ENCODE measurements at regions of chr3 and their contacts with region 1.

Region 1: DNA sequence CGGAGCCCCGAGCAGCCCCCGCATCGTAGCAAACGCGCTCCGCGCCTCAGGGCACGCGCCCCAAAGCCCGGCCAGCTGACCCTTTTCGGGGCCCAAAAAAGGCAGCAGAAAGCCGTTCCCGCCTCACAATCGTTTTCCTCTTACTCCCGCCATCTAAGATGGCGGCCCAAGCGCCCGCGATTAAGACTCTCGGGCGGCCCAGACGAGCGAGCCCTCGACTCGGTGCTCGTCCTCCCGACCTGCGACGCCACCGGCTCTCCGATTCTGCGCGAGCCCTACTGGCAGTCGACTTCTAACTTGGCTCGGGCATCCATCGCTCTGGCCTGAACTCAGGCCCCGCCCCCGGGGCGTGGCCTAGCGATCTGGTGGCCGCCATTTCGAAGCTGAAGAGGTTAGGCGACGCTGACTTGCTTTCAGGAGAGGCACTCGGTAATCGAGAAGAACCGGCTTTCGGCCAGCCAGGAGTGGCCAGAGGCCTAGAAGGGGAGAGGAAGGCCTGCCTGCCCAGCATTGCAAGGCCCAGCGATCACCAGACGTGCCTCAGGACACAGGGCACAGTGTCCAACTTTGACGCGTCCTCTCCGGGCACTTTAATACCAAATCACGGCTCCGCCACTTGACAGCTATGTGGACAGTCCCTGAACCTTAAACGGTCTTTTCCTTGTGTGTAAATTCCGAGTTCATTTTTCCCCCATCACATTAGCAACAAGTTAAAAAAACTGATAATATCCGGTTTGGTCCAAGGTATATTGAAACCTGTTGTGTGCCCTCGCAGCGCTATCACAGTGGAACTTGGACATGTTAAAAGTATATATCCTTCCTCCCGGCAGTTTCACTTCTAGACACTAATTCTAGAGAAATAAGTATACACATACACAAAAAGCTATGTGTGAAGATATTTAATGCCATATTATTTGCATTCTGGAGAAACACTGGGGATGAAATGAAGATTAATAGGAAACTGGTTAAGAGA is at the start of gene RAF1:
- DNase-seq: peak; percentile 97 to 100 (median 98)
- ATAC-seq: peak; percentile 89
- H3K4me3 ChIP-seq: peak within 1 kb of the TSS; percentile 99
- H3K27ac ChIP-seq: peak within 1 kb of the TSS; percentile 99
- H3K4me1 ChIP-seq: peaks cover 21 to 25% of the 10 kb centered on the region in 2 experiments
- H3K27me3 ChIP-seq: no peaks in the 10 kb centered on the region
- CTCF ChIP-seq: no peak; a peak in 1 of 6 replicates
- EP300 ChIP-seq: peak; percentile 50; the same call in 1 of the 2 replicates
- POLR2A ChIP-seq: peak; percentile 97
- RAD21 ChIP-seq: no peak
- polyA plus RNA-seq, gene RAF1: 28.0 to 32.3 TPM

Region 2: GRCh38 chr3:12556671-12557472 is 107.3 kb before region 1 on chr3 and contains the start of gene MKRN2:
- CTCF ChIA-PET with region 1: no interaction called
- POLR2A ChIA-PET with region 1: interaction called, 5 read pairs
- in situ Hi-C with region 1: no loop called
- intact Hi-C with region 1: loop called (anchors 5 kb)
- DNase-seq: peak; percentile 92 to 94 (median 92)
- ATAC-seq: peak; percentile 93
- H3K4me3 ChIP-seq: peak within 1 kb of the TSS; percentile 82
- H3K27ac ChIP-seq: peak within 1 kb of the TSS; percentile 91
- H3K4me1 ChIP-seq: peaks cover 17 to 22% of the 10 kb centered on the region in 2 experiments
- H3K27me3 ChIP-seq: no peaks in the 10 kb centered on the region
- CTCF ChIP-seq: 0 out of 6 replicates have a peak, but pooled peaks of 1 of the 3 experiments have one; percentile 6
- EP300 ChIP-seq: peak; percentile 70
- POLR2A ChIP-seq: peak; percentile 99
- RAD21 ChIP-seq: peak in 1 of 2 experiments; percentile 2; a peak in 1 of 4 replicates
- polyA plus RNA-seq, gene MKRN2: 29.4 to 46.0 TPM

Region 3: GRCh38 chr3:12629560-12629959 is 34.7 kb before region 1 on chr3:
- CTCF ChIA-PET with region 1: no interaction called
- POLR2A ChIA-PET with region 1: interaction called, 6 read pairs
- in situ Hi-C with region 1: no loop called
- intact Hi-C with region 1: loop called (anchors 5 kb)
- DNase-seq: no peak
- ATAC-seq: peak; percentile 32; the same call in 2 of the 3 replicates
- H3K4me3 ChIP-seq: no peak overlapping the region
- H3K27ac ChIP-seq: no peak overlapping the region
- H3K4me1 ChIP-seq: peaks cover 45 to 53% of the 10 kb centered on the region in 2 experiments
- H3K27me3 ChIP-seq: no peaks in the 10 kb centered on the region
- CTCF ChIP-seq: no peak
- EP300 ChIP-seq: no peak
- POLR2A ChIP-seq: no peak
- RAD21 ChIP-seq: no peak

Region 4: GRCh38 chr3:12648384-12648959 is 15.8 kb before region 1 on chr3:
- CTCF ChIA-PET with region 1: no interaction called
- POLR2A ChIA-PET with region 1: interaction called, 24 read pairs
- in situ Hi-C with region 1: no loop called
- intact Hi-C with region 1: no loop called
- DNase-seq: no peak
- ATAC-seq: no peak
- H3K4me3 ChIP-seq: no peak overlapping the region
- H3K27ac ChIP-seq: no peak overlapping the region
- H3K4me1 ChIP-seq: peaks cover 4 to 8% of the 10 kb centered on the region in 2 experiments; a peak in 4 of 5 replicates
- H3K27me3 ChIP-seq: no peaks in the 10 kb centered on the region
- CTCF ChIP-seq: no peak
- EP300 ChIP-seq: no peak
- POLR2A ChIP-seq: no peak
- RAD21 ChIP-seq: no peak

Region 5: DNA sequence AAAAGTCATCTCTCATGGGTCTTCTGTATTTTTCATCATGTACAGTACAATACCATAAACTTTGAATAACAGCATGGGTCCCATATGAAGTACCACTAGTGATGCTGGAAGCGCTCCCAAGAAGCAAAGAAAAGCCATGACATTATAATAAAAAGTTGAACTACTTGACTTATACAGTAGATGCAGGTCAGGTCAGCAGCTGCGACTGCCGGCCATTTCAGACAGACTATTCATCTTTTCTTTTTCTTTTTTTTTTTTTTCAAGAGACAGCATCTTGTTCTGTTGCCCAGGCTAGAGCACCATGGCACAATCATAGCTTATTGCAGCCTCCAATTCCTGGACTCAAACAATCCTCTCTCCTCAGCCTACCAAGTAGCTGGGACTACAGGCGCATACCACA is 10.5 kb before region 1 on chr3:
- CTCF ChIA-PET with region 1: no interaction called
- POLR2A ChIA-PET with region 1: interaction called, 24 read pairs
- in situ Hi-C with region 1: no loop called
- intact Hi-C with region 1: no loop called
- DNase-seq: no peak
- ATAC-seq: no peak
- H3K4me3 ChIP-seq: no peak overlapping the region
- H3K27ac ChIP-seq: no peak overlapping the region
- H3K4me1 ChIP-seq: peaks cover 17 to 19% of the 10 kb centered on the region in 2 experiments
- H3K27me3 ChIP-seq: no peaks in the 10 kb centered on the region
- CTCF ChIP-seq: no peak
- EP300 ChIP-seq: no peak
- POLR2A ChIP-seq: no peak
- RAD21 ChIP-seq: no peak